Dorsolateral prefrontal cortex (tissue), 120 donors: ENCODE measurements at regions of chr16 and their contacts with region 1.

Region 1: GRCh38 chr16:48164907-48165726 is 9.3 kb upstream of the ABCC12 start:
- DNase-seq: peak; percentile 66 to 90 (median 78)
- H3K4me3 ChIP-seq: peak overlapping the region in 26 of 59 donors; percentile 10 to 47 (median 26)
- H3K27ac ChIP-seq: peak overlapping the region in 2 of 59 donors; percentile 14 to 18
- H3K27me3 ChIP-seq: no peaks in the 10 kb centered on the region
- CTCF ChIP-seq: peak; percentile 62 to 94 (median 89)

Region 2: GRCh38 chr16:46947900-46948547 is 1217.1 kb before region 1 on chr16:
- intact Hi-C with region 1: loop called (anchors 5 to 10 kb)
- DNase-seq: no peak
- H3K4me3 ChIP-seq: no peak overlapping the region
- H3K27ac ChIP-seq: no peak overlapping the region
- H3K27me3 ChIP-seq: no peaks in the 10 kb centered on the region
- CTCF ChIP-seq: peak in 52 of 56 donors; percentile 20 to 69 (median 44)

Region 3: GRCh38 chr16:48143812-48144368 is 21.2 kb before region 1 on chr16:
- intact Hi-C with region 1: no loop called
- DNase-seq: no peak
- H3K4me3 ChIP-seq: no peak overlapping the region
- H3K27ac ChIP-seq: no peak overlapping the region
- H3K27me3 ChIP-seq: no peaks in the 10 kb centered on the region
- CTCF ChIP-seq: no peak

Region 4: DNA sequence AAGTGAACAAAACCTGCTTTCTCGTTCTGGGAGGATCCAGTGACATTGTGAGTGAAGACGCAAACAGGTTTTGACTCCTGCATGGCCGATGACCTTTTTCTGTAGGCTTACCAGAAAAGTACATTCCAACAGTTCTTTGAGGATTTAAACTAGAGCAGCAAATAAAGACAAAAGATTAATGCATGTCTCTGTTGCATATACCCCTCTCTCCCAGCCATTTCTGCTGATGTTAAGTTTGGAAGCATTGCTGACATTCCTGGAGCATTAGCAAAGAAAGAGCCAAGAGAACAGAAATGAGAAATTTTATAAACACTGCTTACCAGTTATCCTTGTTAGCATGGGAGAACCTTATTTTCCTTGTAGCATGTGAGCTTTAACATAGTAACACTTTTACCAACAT is 170.8 kb after region 1 on chr16:
- intact Hi-C with region 1: no loop called
- DNase-seq: no peak
- H3K4me3 ChIP-seq: no peak overlapping the region
- H3K27ac ChIP-seq: peak overlapping the region in 2 of 59 donors; percentile 12 to 16
- H3K27me3 ChIP-seq: no peaks in the 10 kb centered on the region
- CTCF ChIP-seq: no peak

Region 5: DNA sequence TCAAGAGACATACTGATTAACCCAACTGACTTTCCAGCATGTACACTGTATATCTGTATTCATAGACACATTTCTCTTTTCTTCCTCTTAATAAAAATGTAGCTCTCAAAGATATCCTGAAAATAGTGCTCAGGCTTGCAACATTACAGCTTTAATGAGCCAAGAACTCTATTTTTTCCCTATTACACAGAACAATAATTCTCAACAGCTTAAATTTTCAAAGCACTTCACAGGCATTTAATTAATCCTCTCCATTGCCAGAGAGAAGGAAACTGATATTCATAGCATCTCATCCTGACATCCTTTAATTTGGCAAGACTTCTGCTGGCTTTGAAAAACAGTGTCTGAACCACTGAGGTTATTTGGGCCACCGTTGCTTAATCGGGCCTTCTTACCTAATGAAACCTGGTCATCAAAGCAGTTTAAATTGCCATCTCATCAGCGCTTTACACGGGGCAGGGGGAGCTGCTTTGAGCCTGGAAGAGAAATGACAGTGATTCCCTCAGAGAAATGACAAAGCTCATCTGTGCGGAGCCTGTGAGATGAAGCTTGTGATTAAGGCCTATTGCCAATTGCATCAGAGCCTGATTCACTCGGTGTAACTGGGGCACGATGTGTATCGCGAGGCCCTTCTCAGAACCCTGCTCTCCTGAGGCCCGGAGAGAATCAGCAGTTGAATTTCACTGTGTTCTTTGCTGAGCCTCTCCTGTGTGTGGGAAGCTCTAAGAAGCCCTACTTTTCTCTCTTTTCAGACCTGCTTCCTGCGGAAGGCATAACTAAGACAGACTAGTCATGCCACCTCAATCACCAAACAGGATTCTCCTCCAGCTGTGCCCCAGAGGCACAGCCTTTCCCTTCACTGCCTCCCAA is 228.6 kb after region 1 on chr16:
- intact Hi-C with region 1: no loop called
- DNase-seq: peak in 9 of 10 donors; percentile 51 to 88 (median 73)
- H3K4me3 ChIP-seq: peak overlapping the region in 27 of 59 donors; percentile 2 to 45 (median 17)
- H3K27ac ChIP-seq: peak overlapping the region; percentile 76 to 99 (median 94)
- H3K27me3 ChIP-seq: no peaks in the 10 kb centered on the region
- CTCF ChIP-seq: peak in 11 of 56 donors; percentile 10 to 46 (median 16)